CD8-positive, alpha-beta T cell (primary cell): ENCODE measurements at regions of chr15 and their contacts with region 1.

Region 1: DNA sequence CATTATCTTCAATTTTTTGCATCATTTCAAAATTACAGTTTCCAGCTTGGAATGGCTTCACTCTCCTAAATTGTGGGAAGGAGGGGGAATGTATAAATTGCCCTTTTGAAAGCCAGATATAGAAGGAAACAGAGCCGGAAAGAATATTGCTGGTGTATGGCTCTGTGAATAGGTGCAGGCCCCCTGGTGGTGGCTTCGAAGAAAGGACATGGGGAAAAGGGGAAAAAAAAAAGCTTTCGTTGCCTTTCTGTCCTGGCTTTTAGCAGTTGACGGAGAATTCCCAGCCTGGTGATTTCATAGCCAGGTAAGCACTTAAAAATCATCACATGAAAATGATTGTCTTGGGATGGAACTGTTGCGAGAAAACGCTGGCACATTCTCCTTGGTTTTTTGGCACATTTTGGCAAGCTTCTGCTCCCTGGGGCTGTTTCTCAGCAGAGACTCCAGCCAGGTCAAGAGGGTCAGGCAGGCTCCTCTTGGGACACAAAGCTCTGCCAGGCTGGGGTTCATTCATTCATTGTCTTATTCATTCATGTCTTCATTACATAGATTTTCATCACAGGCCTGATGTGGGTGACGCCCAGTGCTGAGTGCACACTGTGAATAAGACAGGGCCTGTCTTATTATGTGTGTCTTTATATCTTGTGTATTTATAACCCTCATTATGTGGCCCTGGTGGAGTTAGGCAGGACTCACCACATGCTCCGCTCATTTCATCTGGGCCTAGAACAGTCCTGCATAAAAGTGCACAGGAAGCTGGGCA is 300.0 kb upstream of the TPM1 start:
- DNase-seq: peak in 6 of 9 experiments; percentile 6 to 61 (median 28)
- ATAC-seq: no peak
- H3K4me3 ChIP-seq: no peak overlapping the region
- H3K4me3 Mint-ChIP-seq: no peak overlapping the region
- H3K27ac ChIP-seq: no peak overlapping the region
- H3K27ac Mint-ChIP-seq: no peak overlapping the region
- H3K4me1 ChIP-seq: no peaks in the 10 kb centered on the region
- H3K4me1 Mint-ChIP-seq: peaks cover 10% of the 10 kb centered on the region
- H3K27me3 ChIP-seq: no peaks in the 10 kb centered on the region
- H3K27me3 Mint-ChIP-seq: peaks cover 2% of the 10 kb centered on the region
- CTCF ChIP-seq: peak; percentile 83

Region 2: DNA sequence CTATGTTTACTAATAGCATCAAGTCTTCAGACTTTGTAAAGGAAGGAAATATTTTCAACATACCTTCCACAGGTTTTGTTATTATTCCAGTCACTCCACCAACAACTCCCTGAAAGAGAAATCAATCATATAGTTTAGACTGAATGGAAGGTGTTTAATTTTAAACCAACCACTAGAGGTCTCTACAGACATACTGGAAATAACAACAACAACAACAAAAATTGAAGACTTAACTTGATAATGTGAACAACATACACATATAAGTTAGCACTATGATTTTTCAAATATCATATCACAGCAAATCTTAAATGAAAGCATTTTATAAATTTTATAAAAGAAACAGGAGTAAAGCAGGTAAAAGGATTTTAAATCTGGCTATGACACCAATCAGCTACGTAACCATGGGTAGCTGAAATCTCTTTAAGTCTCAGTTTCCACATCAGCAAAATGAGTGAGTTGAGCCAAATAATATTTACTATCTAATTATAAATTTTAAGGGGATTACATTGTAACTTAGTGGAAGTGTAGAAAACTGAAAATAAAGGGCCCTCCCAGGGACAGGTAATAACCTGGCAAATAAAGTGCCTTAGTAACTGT is 870.6 kb before region 1 on chr15:
- CTCF ChIA-PET with region 1: no interaction called
- POLR2A ChIA-PET with region 1: no interaction called
- intact Hi-C with region 1: loop called in 1 of 2 experiments (anchors 5 kb)
- DNase-seq: peak in 2 of 9 experiments; percentile 7 to 27
- ATAC-seq: no peak
- H3K4me3 ChIP-seq: no peak overlapping the region
- H3K4me3 Mint-ChIP-seq: no peak overlapping the region
- H3K27ac ChIP-seq: no peak overlapping the region
- H3K27ac Mint-ChIP-seq: no peak overlapping the region
- H3K4me1 ChIP-seq: no peaks in the 10 kb centered on the region
- H3K4me1 Mint-ChIP-seq: no peaks in the 10 kb centered on the region
- H3K27me3 ChIP-seq: no peaks in the 10 kb centered on the region
- H3K27me3 Mint-ChIP-seq: no peaks in the 10 kb centered on the region
- CTCF ChIP-seq: peak; percentile 66

Region 3: DNA sequence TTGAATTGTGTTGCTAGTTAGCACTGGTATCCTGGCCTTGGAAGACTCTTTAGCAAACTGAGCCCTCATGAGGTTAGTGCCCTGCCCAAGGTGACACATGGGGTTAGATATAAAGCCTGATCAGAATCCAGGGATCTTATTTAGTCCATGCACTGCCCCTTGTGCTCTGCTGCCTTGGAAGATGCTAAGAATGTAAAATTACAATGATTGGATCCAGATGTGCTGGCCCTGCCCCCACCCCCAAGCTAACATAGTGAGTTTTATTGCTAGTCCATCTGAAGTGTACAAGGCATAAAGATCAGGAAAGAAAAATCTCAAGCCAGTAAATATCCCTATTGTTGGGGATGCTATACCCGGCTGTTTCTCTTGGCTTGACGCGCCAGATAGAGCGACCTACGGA is 329.4 kb before region 1 on chr15:
- CTCF ChIA-PET with region 1: no interaction called
- POLR2A ChIA-PET with region 1: no interaction called
- intact Hi-C with region 1: no loop called
- DNase-seq: no peak
- ATAC-seq: no peak
- H3K4me3 ChIP-seq: no peak overlapping the region
- H3K4me3 Mint-ChIP-seq: no peak overlapping the region
- H3K27ac ChIP-seq: no peak overlapping the region
- H3K27ac Mint-ChIP-seq: no peak overlapping the region
- H3K4me1 ChIP-seq: no peaks in the 10 kb centered on the region
- H3K4me1 Mint-ChIP-seq: no peaks in the 10 kb centered on the region
- H3K27me3 ChIP-seq: no peaks in the 10 kb centered on the region
- H3K27me3 Mint-ChIP-seq: peaks cover 14% of the 10 kb centered on the region
- CTCF ChIP-seq: no peak

Region 4: DNA sequence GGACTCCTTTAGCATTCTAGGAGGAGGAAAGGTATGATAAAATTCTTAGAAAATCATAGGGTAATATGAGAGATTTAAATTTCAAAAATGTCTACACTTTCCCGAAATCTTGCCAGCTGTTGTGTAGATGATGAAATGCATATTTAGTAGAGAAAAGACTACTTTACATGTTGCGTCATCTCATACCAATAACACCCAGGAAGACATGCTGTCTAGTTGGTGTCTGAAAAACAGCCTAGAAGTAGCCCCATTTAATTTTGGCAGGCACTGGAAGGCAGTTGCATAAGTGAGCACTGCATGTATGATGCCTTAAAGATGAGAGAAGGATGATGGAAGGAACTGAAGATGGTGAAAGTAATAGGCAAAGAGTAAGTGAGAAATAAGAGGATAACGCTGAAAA is 10.5 kb before region 1 on chr15:
- CTCF ChIA-PET with region 1: interaction called, 37 read pairs
- POLR2A ChIA-PET with region 1: no interaction called
- intact Hi-C with region 1: no loop called
- DNase-seq: no peak
- ATAC-seq: no peak
- H3K4me3 ChIP-seq: no peak overlapping the region
- H3K4me3 Mint-ChIP-seq: no peak overlapping the region
- H3K27ac ChIP-seq: no peak overlapping the region
- H3K27ac Mint-ChIP-seq: no peak overlapping the region
- H3K4me1 ChIP-seq: no peaks in the 10 kb centered on the region
- H3K4me1 Mint-ChIP-seq: no peaks in the 10 kb centered on the region
- H3K27me3 ChIP-seq: no peaks in the 10 kb centered on the region
- H3K27me3 Mint-ChIP-seq: peaks cover 3% of the 10 kb centered on the region
- CTCF ChIP-seq: no peak

Region 5: DNA sequence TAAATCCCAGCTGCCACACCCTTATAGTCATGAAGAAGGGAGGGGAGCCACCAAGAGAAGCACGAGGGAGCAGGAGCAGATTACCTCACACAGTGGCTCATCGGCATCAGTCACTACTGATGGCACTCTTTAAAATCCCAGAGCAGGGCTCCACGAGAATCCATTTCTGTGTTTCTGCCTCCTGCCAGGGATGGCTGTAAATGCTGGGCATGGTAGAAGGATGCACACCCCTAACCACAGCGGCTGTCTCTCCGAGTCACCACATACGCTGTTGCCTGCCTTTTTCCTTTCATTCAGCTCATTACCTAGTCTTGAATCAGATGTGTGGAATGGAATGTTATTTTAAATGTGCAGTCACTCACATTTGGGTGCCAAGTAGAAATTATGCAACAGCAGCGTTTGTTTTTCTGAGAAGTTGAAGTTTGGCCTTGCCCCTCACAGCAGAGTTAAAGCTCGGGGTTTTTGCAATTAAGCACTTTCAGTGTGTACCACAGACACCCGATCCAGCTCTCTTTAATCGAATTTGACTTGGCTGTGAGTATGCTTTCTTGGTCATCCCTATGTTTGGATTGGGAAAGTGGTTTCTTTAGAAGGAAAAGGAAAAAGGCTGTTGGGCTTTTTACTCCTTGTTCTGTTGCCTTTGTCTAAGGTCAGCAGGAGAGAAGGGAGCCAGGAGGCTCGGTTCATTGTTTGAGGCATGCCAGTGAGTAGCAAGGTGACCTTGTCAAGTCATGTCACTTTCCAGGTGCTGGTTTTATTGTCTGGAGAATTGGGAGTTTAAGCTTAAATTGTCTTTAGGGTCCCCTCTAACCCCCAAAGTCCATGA is 15.7 kb after region 1 on chr15:
- CTCF ChIA-PET with region 1: interaction called, 18 read pairs
- POLR2A ChIA-PET with region 1: no interaction called
- intact Hi-C with region 1: no loop called
- DNase-seq: no peak
- ATAC-seq: no peak
- H3K4me3 ChIP-seq: no peak overlapping the region
- H3K4me3 Mint-ChIP-seq: no peak overlapping the region
- H3K27ac ChIP-seq: no peak overlapping the region
- H3K27ac Mint-ChIP-seq: no peak overlapping the region
- H3K4me1 ChIP-seq: no peaks in the 10 kb centered on the region
- H3K4me1 Mint-ChIP-seq: no peaks in the 10 kb centered on the region
- H3K27me3 ChIP-seq: no peaks in the 10 kb centered on the region
- H3K27me3 Mint-ChIP-seq: no peaks in the 10 kb centered on the region
- CTCF ChIP-seq: no peak